A549 (cell line): ENCODE measurements at regions of chr1 and their contacts with region 1.

Region 1: DNA sequence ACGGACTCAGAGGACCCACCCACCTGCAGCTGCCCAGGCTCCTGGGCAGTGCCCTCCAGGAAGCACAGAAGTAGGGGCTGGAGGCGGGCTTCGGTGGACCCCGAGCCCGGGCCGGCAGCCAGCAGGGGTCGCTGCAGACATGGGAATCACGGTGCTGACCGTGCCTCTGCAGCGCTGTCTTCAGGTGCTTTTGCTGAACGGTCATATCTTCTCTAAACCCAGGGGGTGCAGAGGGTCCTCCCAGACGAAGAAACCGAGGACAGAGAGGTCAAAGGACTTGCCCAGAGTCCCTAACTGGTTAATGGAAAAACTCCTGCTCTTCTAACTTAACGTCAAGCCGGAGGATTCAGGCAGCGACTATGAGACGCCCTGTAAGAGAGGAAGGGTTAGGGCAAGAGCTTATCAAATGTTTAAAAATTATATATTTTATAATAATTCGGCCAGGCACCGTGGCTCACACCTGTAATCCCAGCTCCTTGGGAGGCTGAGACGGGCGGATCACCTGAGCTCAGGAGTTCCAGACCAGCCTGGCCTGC is 21.5 kb upstream of the LEFTY2 start:
- DNase-seq: peak; percentile 64 to 71
- ATAC-seq: peak; percentile 98 to 100
- H3K4me3 ChIP-seq: peak overlapping the region; percentile 26; the same call in 2 of the 3 replicates
- H3K27ac ChIP-seq: peak overlapping the region in 1 of 2 experiments; percentile 45; a peak in 2 of 6 replicates
- H3K4me1 ChIP-seq: no peaks in the 10 kb centered on the region
- CTCF ChIP-seq: peak; percentile 81
- EP300 ChIP-seq: no peak
- POLR2A ChIP-seq: no peak
- RAD21 ChIP-seq: peak; percentile 59 to 62

Region 2: GRCh38 chr1:225830841-225831240 is 131.7 kb before region 1 on chr1:
- CTCF ChIA-PET with region 1: no interaction called
- POLR2A ChIA-PET with region 1: no interaction called
- DNase-seq: no peak
- ATAC-seq: no peak
- H3K4me3 ChIP-seq: no peak overlapping the region
- H3K27ac ChIP-seq: no peak overlapping the region
- H3K4me1 ChIP-seq: peaks cover 9% of the 10 kb centered on the region; the same call in 2 of the 3 replicates
- CTCF ChIP-seq: no peak
- EP300 ChIP-seq: no peak
- POLR2A ChIP-seq: no peak
- RAD21 ChIP-seq: no peak

Region 3: GRCh38 chr1:225950905-225951497 is 11.5 kb before region 1 on chr1:
- CTCF ChIA-PET with region 1: interaction called, 26 read pairs
- POLR2A ChIA-PET with region 1: no interaction called
- DNase-seq: no peak
- ATAC-seq: peak; percentile 46 to 60; a peak in 2 of 6 replicates
- H3K4me3 ChIP-seq: no peak overlapping the region
- H3K27ac ChIP-seq: no peak overlapping the region
- H3K4me1 ChIP-seq: no peaks in the 10 kb centered on the region
- CTCF ChIP-seq: no peak
- EP300 ChIP-seq: no peak
- POLR2A ChIP-seq: no peak
- RAD21 ChIP-seq: no peak

Region 4: GRCh38 chr1:225977937-225978748 is 15.6 kb after region 1 on chr1:
- CTCF ChIA-PET with region 1: interaction called, 25 read pairs
- POLR2A ChIA-PET with region 1: no interaction called
- DNase-seq: no peak
- ATAC-seq: 0 out of 6 replicates have a peak, but pooled peaks of 1 of the 2 experiments have one; percentile 27
- H3K4me3 ChIP-seq: no peak overlapping the region
- H3K27ac ChIP-seq: no peak overlapping the region
- H3K4me1 ChIP-seq: no peaks in the 10 kb centered on the region
- CTCF ChIP-seq: no peak
- EP300 ChIP-seq: no peak
- POLR2A ChIP-seq: no peak
- RAD21 ChIP-seq: no peak